ENCODE measurements at regions of chr17 and their contacts with region 1.

Region 1: GRCh38 chr17:7515911-7516610 is 31.9 kb downstream of the POLR2A start:
- DNase-seq: no peak
- ATAC-seq: no peak
- H3K4me3 ChIP-seq: no peak overlapping the region
- H3K4me3 Mint-ChIP-seq: no peak overlapping the region
- H3K27ac ChIP-seq: no peak overlapping the region
- H3K27ac Mint-ChIP-seq: no peak overlapping the region
- H3K4me1 ChIP-seq: no peaks in the 10 kb centered on the region
- H3K4me1 Mint-ChIP-seq: no peaks in the 10 kb centered on the region
- H3K27me3 ChIP-seq: no peaks in the 10 kb centered on the region
- H3K27me3 Mint-ChIP-seq: no peaks in the 10 kb centered on the region
- CTCF ChIP-seq: no peak

Region 2: DNA sequence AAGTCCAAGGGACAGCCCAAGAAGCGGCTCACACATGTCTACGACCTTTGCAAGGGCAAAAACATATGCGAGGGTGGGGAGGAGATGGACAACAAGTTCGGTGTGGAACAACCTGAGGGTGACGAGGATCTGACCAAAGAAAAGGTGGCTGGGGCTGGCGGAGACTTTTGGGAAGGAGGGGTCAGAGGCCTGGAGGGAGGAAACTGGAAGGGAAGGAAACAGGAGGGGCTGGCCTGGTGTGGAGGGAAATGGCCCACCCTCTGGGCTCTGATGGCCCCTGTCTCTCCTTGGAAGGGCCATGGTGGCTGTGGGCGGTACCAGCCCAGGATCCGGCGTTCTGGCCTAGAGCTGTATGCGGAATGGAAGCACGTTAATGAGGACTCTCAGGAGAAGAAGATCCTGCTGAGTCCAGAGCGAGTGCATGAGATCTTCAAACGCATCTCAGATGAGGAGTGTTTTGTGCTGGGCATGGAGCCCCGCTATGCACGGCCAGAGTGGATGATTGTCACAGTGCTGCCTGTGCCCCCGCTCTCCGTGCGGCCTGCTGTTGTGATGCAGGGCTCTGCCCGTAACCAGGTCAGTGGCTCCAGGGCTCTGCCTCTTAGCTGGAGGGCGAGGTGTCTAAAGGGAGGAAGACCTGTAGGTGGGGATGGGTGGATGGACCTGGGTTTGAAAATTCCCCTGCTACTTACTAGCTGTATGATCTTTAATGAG is 19.4 kb before region 1 on chr17:
- CTCF ChIA-PET with region 1: interaction called, 21 read pairs
- POLR2A ChIA-PET with region 1: interaction called, 4 read pairs
- intact Hi-C with region 1: no loop called
- DNase-seq: peak; percentile 22
- ATAC-seq: no peak
- H3K4me3 ChIP-seq: no peak overlapping the region
- H3K4me3 Mint-ChIP-seq: no peak overlapping the region
- H3K27ac ChIP-seq: no peak overlapping the region
- H3K27ac Mint-ChIP-seq: peak overlapping the region; percentile 15
- H3K4me1 ChIP-seq: no peaks in the 10 kb centered on the region
- H3K4me1 Mint-ChIP-seq: peaks cover 22% of the 10 kb centered on the region
- H3K27me3 ChIP-seq: no peaks in the 10 kb centered on the region
- H3K27me3 Mint-ChIP-seq: no peaks in the 10 kb centered on the region
- CTCF ChIP-seq: no peak

Region 3: GRCh38 chr17:7502987-7503386 is 13.1 kb before region 1 on chr17:
- CTCF ChIA-PET with region 1: interaction called, 10 read pairs
- POLR2A ChIA-PET with region 1: no interaction called
- intact Hi-C with region 1: no loop called
- DNase-seq: peak; percentile 34
- ATAC-seq: no peak
- H3K4me3 ChIP-seq: no peak overlapping the region
- H3K4me3 Mint-ChIP-seq: no peak overlapping the region
- H3K27ac ChIP-seq: no peak overlapping the region
- H3K27ac Mint-ChIP-seq: no peak overlapping the region
- H3K4me1 ChIP-seq: no peaks in the 10 kb centered on the region
- H3K4me1 Mint-ChIP-seq: no peaks in the 10 kb centered on the region
- H3K27me3 ChIP-seq: no peaks in the 10 kb centered on the region
- H3K27me3 Mint-ChIP-seq: no peaks in the 10 kb centered on the region
- CTCF ChIP-seq: peak; percentile 3

Region 4: DNA sequence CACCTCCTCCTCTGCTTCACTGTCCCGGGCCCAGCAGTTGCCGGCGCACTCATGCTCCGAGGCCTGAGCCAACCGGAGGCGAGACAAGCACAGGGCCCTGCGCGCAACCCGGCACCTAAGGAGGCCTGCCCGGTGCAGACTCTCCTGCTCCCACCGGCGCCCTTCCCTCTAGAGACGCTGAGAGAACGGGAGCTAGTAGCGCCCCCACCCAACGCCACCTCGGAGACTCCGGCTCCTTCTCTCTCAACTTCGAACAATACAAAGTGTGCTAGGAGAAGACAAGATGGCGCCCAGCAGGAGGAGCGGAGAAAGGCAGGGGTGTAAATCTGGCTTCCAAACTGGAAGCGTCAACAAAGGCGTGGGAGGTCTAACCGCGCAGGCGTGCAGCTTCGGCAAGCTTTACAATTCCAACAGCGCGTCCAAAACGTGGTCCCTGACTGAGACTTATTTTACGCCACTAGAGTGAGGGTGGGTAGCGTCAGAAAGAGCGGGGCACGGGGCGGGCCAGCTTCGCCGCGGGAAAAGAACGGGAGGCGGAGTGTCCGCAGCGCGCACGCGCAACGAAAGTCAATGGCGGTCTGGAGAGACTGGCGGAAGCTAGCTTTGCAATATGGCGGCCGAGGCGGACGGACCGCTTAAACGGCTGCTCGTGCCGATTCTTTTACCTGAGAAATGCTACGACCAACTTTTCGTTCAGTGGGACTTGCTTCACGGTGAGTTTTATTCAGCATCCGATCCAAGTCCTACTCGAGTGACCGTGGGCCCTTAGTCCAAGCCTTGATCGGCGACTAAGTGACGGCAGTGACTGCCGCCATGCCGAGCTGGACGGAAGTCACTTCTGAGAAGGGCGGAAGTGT is 67.4 kb after region 1 on chr17 and contains the start of gene MPDU1:
- CTCF ChIA-PET with region 1: interaction called, 111 read pairs
- POLR2A ChIA-PET with region 1: interaction called, 4 read pairs
- intact Hi-C with region 1: no loop called
- DNase-seq: peak; percentile 98
- ATAC-seq: peak; percentile 78
- H3K4me3 ChIP-seq: peak within 1 kb of the TSS; percentile 77 to 96 (median 86)
- H3K4me3 Mint-ChIP-seq: peak within 1 kb of the TSS; percentile 100
- H3K27ac ChIP-seq: peak within 1 kb of the TSS; percentile 91 to 95
- H3K27ac Mint-ChIP-seq: peak within 1 kb of the TSS; percentile 100
- H3K4me1 ChIP-seq: peaks cover 48 to 68% of the 10 kb centered on the region in 2 donors
- H3K4me1 Mint-ChIP-seq: peaks cover 57% of the 10 kb centered on the region
- H3K27me3 ChIP-seq: no peaks in the 10 kb centered on the region
- H3K27me3 Mint-ChIP-seq: no peaks in the 10 kb centered on the region
- CTCF ChIP-seq: no peak
- total RNA-seq, gene MPDU1: 29.7 and 31.7 TPM in 2 replicates

Region 5: GRCh38 chr17:7589204-7589868 is 73.3 kb after region 1 on chr17:
- CTCF ChIA-PET with region 1: interaction called, 111 read pairs
- POLR2A ChIA-PET with region 1: interaction called, 4 read pairs
- intact Hi-C with region 1: loop called (anchors 1 kb)
- DNase-seq: peak; percentile 84
- ATAC-seq: peak; percentile 86
- H3K4me3 ChIP-seq: no peak overlapping the region
- H3K4me3 Mint-ChIP-seq: no peak overlapping the region
- H3K27ac ChIP-seq: no peak overlapping the region
- H3K27ac Mint-ChIP-seq: no peak overlapping the region
- H3K4me1 ChIP-seq: peaks cover 7 to 21% of the 10 kb centered on the region in 2 donors
- H3K4me1 Mint-ChIP-seq: peaks cover 10% of the 10 kb centered on the region
- H3K27me3 ChIP-seq: no peaks in the 10 kb centered on the region
- H3K27me3 Mint-ChIP-seq: no peaks in the 10 kb centered on the region
- CTCF ChIP-seq: peak; percentile 91